ENCODE measurements at regions of chr6 and their contacts with region 1.

Region 1: DNA sequence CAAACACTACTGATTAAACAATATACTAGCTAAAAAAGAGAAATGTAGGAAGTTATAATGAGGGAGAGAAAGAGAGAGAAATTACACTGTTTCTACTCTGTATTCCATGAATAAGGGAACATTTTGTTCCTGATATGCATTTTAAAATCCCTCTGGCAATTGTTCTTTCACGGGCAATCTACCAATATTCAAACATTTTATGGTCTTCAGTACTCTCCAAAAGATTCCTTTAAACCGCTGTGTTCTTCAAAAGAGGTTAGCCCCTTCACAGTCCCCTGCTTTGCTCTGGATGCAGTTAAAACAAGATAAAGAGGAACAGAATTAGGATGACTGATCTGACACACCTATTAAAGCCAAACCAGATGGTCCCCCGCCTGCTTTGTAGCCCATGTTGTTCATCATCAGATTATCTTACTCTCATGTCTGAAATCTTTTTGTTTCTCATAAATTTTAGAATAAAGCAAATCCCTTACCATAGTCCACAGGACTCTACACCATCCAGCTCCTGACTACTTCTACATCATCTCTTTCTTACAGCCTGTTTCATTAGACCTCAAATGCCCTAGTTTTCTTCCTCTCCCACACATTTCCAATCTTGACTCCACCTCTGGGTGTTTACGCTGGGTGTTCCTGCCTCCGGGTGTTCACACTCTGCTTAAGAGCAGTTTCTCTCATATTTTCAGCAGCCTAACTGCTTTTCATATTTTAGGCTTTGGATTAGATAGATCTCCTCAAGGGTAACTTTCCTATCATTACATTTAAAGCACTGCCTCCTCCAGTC is 399.7 kb downstream of the COL12A1 start:
- DNase-seq: no peak
- ATAC-seq: no peak
- H3K4me3 ChIP-seq: no peak overlapping the region
- H3K4me3 Mint-ChIP-seq: no peak overlapping the region
- H3K27ac ChIP-seq: no peak overlapping the region
- H3K27ac Mint-ChIP-seq: no peak overlapping the region
- H3K4me1 ChIP-seq: no peaks in the 10 kb centered on the region
- H3K4me1 Mint-ChIP-seq: no peaks in the 10 kb centered on the region
- H3K27me3 ChIP-seq: no peaks in the 10 kb centered on the region
- H3K27me3 Mint-ChIP-seq: no peaks in the 10 kb centered on the region

Region 2: DNA sequence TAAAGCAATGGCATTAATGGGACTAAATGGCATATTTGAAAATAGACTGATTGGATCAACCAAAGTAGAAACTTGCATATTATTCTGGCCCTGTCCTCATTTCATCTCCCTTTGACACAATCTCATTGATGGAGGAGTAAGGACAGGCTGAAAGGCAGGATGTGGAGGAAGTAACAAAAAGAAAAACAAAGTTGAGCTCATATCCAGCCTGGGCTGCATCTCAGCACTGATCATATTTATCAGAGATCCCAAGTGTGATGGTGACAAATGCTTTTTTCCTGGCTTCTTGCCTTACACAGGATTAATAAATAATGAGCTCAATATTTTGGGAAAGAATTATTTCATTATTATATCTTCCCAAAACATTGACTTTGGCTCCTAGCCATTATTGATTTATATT is 487.4 kb before region 1 on chr6:
- CTCF ChIA-PET with region 1: no interaction called
- POLR2A ChIA-PET with region 1: no interaction called
- intact Hi-C with region 1: no loop called
- DNase-seq: no peak
- ATAC-seq: no peak
- H3K4me3 ChIP-seq: no peak overlapping the region
- H3K4me3 Mint-ChIP-seq: no peak overlapping the region
- H3K27ac ChIP-seq: no peak overlapping the region
- H3K27ac Mint-ChIP-seq: no peak overlapping the region
- H3K4me1 ChIP-seq: no peaks in the 10 kb centered on the region
- H3K4me1 Mint-ChIP-seq: no peaks in the 10 kb centered on the region
- H3K27me3 ChIP-seq: no peaks in the 10 kb centered on the region
- H3K27me3 Mint-ChIP-seq: no peaks in the 10 kb centered on the region

Region 3: DNA sequence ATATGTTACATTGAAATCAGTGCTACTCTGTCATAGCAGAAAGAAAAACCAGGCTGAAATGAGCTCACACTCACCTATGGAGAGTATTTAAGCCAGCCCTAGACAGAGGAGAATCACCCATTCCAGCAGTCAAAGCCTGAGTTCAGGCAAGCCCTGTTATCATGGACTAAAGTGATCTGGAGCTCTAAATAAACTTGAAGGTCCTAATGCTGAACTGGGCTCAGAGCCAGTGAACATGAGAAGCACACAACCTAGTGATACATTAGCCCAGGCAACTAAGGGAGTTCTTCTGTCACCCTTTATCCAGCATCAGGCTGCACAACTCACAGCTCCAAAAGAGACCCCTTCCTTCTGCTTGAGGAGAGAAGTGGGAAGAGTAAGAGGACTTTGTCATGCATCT is 25.3 kb before region 1 on chr6:
- CTCF ChIA-PET with region 1: no interaction called
- POLR2A ChIA-PET with region 1: no interaction called
- intact Hi-C with region 1: loop called in 1 of 2 experiments (anchors 2 kb)
- DNase-seq: no peak
- ATAC-seq: no peak
- H3K4me3 ChIP-seq: no peak overlapping the region
- H3K4me3 Mint-ChIP-seq: no peak overlapping the region
- H3K27ac ChIP-seq: no peak overlapping the region
- H3K27ac Mint-ChIP-seq: no peak overlapping the region
- H3K4me1 ChIP-seq: no peaks in the 10 kb centered on the region
- H3K4me1 Mint-ChIP-seq: no peaks in the 10 kb centered on the region
- H3K27me3 ChIP-seq: no peaks in the 10 kb centered on the region
- H3K27me3 Mint-ChIP-seq: no peaks in the 10 kb centered on the region